Activated CD4-positive, alpha-beta T cell treated with anti-CD3 and anti-CD28 coated beads, Interleukin-2, amount 10 ng/mL, durations not matched to agents 24 days and 14 days (primary cell): ENCODE measurements at regions of chr14 and their contacts with region 1.

Region 1: GRCh38 chr14:80954687-80955299 is 628 bp upstream of the TSHR start:
- DNase-seq: peak; percentile 93
- H3K4me3 Mint-ChIP-seq: peak overlapping the region; percentile 91
- H3K27ac Mint-ChIP-seq: peak overlapping the region; percentile 68
- H3K4me1 Mint-ChIP-seq: peaks cover 45% of the 10 kb centered on the region
- H3K27me3 Mint-ChIP-seq: peaks cover 44% of the 10 kb centered on the region

Region 2: GRCh38 chr14:80645667-80646413 is 309.0 kb before region 1 on chr14:
- intact Hi-C with region 1: no loop called
- DNase-seq: no peak
- H3K4me3 Mint-ChIP-seq: no peak overlapping the region
- H3K27ac Mint-ChIP-seq: no peak overlapping the region
- H3K4me1 Mint-ChIP-seq: no peaks in the 10 kb centered on the region
- H3K27me3 Mint-ChIP-seq: no peaks in the 10 kb centered on the region

Region 3: DNA sequence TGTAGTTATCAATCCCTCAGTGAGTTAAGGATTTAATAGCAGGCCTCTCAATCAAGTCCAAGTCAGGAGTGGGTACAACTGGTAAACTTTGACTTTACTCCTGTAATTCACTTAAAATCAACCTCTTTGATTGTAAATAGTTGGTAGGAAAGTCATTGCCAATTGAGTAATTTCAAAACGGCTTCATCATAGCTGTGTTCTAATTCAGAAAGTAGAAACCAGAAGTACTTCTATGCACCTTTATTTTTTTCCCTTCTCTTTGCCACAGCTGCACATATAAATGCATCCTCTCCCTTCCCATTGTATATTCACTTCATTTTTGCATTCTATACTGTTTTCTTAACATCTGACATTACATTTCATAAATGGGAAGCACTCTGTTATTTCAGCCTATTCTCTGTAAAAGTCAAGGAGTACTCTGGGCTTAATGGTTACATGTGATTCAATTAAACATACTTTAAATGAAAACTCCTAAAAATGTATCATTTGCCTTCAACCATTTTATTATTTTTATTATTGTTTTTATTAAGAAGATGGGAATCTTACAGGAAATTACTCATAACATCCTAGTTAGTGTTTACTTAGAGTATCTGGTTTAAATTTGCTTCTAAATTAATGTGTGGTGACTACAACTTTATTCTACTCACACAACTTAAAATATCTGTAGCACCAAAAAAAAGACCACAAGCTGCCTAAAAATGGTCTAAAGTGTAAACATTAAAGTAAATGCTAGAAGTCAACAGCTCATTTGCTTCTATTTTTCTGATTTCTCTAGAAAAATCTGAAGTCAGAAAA is 184.5 kb before region 1 on chr14:
- intact Hi-C with region 1: no loop called
- DNase-seq: no peak
- H3K4me3 Mint-ChIP-seq: no peak overlapping the region
- H3K27ac Mint-ChIP-seq: no peak overlapping the region
- H3K4me1 Mint-ChIP-seq: no peaks in the 10 kb centered on the region
- H3K27me3 Mint-ChIP-seq: no peaks in the 10 kb centered on the region

Region 4: DNA sequence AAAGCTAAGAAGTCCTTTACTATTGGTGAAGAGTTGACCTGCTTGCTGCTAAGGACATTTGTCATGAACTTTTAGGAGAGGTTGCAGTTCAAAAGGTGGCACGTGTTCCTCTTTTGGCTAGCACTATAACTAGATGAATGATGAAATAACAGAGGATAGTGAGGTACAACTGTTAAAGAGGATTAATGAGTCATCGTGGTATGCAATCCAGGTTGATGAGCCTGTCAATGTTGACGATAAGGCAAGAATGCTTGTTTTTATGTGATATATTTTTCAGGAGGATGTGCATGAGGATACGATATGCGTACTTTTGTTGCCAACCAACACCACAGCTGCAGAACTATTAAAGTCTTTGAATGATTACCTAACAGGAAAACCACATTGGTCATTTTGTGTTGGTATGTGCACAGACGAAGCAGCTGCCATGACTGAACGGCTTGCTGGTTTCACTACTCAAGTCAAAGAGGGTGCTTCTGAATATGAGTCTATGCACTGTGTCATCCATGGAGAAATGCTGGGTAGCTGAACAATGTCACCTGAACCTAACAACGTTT is 23.9 kb before region 1 on chr14:
- intact Hi-C with region 1: loop called (anchors 1 kb)
- DNase-seq: peak; percentile 87
- H3K4me3 Mint-ChIP-seq: peak overlapping the region; percentile 73
- H3K27ac Mint-ChIP-seq: peak overlapping the region; percentile 90
- H3K4me1 Mint-ChIP-seq: peaks cover 51% of the 10 kb centered on the region
- H3K27me3 Mint-ChIP-seq: no peaks in the 10 kb centered on the region

Region 5: GRCh38 chr14:80978403-80978802 is 23.6 kb after region 1 on chr14:
- intact Hi-C with region 1: loop called (anchors 1 kb)
- DNase-seq: peak; percentile 76
- H3K4me3 Mint-ChIP-seq: peak overlapping the region; percentile 11
- H3K27ac Mint-ChIP-seq: no peak overlapping the region
- H3K4me1 Mint-ChIP-seq: peaks cover 41% of the 10 kb centered on the region
- H3K27me3 Mint-ChIP-seq: peaks cover 25% of the 10 kb centered on the region

Region 6: DNA sequence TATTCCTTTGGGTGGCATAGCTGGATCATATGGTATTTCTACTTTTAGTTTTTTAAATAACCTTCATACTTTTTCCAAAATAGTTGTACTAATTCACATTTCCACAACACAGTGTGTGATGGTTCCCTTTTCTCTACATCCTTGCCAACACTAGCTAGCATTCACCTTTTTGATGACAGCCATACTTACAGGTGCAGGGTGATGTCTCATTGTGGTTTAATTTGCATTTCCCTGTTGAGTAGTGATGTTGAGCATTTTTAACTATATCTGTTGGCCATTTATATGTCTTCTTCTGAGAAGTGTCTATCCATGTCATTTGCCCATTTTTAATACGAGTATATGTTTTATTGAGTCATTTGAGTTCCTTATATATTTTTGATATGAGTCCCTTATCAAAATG is 96.8 kb after region 1 on chr14:
- intact Hi-C with region 1: loop called (anchors 5 kb)
- DNase-seq: no peak
- H3K4me3 Mint-ChIP-seq: no peak overlapping the region
- H3K27ac Mint-ChIP-seq: no peak overlapping the region
- H3K4me1 Mint-ChIP-seq: no peaks in the 10 kb centered on the region
- H3K27me3 Mint-ChIP-seq: no peaks in the 10 kb centered on the region

Region 7: DNA sequence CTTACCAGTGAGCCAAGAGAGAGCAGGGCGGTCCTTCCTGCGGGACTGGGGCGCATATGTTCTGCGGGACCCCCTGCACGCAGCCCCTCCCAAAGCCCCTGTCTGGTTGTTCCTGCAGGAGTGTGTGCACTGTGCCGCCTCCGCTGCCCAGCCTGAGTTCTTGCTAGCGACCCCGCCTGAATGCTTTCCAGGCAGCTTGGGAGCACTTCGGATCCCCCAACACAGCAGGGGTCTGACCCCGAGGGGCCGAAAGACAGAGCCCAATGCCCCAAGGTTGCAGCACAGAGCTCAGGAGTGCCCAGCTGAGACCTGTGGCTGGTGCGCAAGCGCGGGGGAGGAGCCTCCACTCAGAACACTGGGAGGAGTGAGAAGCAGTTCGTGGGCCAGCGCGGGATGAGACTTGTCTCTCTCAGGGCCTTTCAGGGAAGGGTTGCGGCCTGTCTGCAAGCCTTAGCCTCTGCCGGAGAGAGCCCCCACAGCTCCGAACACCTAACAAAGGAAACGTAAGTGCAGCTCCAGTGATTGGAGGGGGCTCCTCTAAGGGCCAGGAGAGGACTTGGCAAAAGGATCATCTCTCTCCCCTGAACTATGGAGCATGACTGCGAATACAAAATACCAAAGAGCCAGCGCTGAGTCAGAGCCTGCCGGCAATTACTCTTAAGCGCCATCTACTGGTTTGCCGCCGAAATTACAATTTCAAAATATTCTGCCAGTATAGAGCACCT is 215.5 kb after region 1 on chr14:
- intact Hi-C with region 1: loop called (anchors 1 kb)
- DNase-seq: peak; percentile 96
- H3K4me3 Mint-ChIP-seq: peak overlapping the region; percentile 96
- H3K27ac Mint-ChIP-seq: peak overlapping the region; percentile 99
- H3K4me1 Mint-ChIP-seq: peaks cover 40% of the 10 kb centered on the region
- H3K27me3 Mint-ChIP-seq: no peaks in the 10 kb centered on the region